ENCODE measurements at regions of chr17 and their contacts with region 1.

Region 1: GRCh38 chr17:44070455-44071197 is at the start of gene G6PC3:
- DNase-seq: peak; percentile 95 to 96
- H3K4me3 ChIP-seq: peak within 1 kb of the TSS; percentile 50 to 86 (median 82)
- H3K27ac ChIP-seq: peak within 1 kb of the TSS; percentile 96
- H3K4me1 ChIP-seq: peaks cover 0 to 4% (median under 1%) of the 10 kb centered on the region in 4 experiments; a peak in 4 of 7 replicates
- H3K27me3 ChIP-seq: no peaks in the 10 kb centered on the region
- CTCF ChIP-seq: no peak
- EP300 ChIP-seq: peak; percentile 6 to 84
- POLR2A ChIP-seq: peak; percentile 96 to 98
- RAD21 ChIP-seq: 0 out of 4 replicates have a peak, but pooled peaks have one; percentile 5
- total RNA-seq, gene G6PC3: 104 and 114 TPM in 2 replicates

Region 2: GRCh38 chr17:43661699-43662412 is 408.8 kb before region 1 on chr17 and contains the start of gene MEOX1:
- CTCF ChIA-PET with region 1: no interaction called
- POLR2A ChIA-PET with region 1: no interaction called
- DNase-seq: no peak
- H3K4me3 ChIP-seq: no peak within 1 kb of the TSS
- H3K27ac ChIP-seq: no peak within 1 kb of the TSS
- H3K4me1 ChIP-seq: peaks cover 3 to 26% (median 16%) of the 10 kb centered on the region in 4 experiments; a peak in 5 of 7 replicates
- H3K27me3 ChIP-seq: no peaks in the 10 kb centered on the region; a peak in 1 of 7 replicates
- CTCF ChIP-seq: no peak
- EP300 ChIP-seq: no peak
- POLR2A ChIP-seq: no peak
- RAD21 ChIP-seq: no peak
- total RNA-seq, gene MEOX1: not detected in 2 replicates

Region 3: GRCh38 chr17:44014437-44015172 is 56.0 kb before region 1 on chr17 and contains the start of gene TMEM101:
- CTCF ChIA-PET with region 1: no interaction called
- POLR2A ChIA-PET with region 1: interaction called, 10 read pairs
- DNase-seq: peak; percentile 82 to 86
- H3K4me3 ChIP-seq: peak within 1 kb of the TSS; percentile 84 to 91 (median 88)
- H3K27ac ChIP-seq: peak within 1 kb of the TSS; percentile 90
- H3K4me1 ChIP-seq: peaks cover 0 to 2% (median 0%) of the 10 kb centered on the region in 4 experiments; a peak in 3 of 7 replicates
- H3K27me3 ChIP-seq: no peaks in the 10 kb centered on the region
- CTCF ChIP-seq: no peak
- EP300 ChIP-seq: peak in 1 of 2 experiments; percentile 65; a peak in 1 of 3 replicates
- POLR2A ChIP-seq: peak in 1 of 2 experiments; percentile 86; a peak in 2 of 3 replicates
- RAD21 ChIP-seq: peak in 1 of 2 experiments; percentile 20; a peak in 1 of 4 replicates
- total RNA-seq, gene TMEM101: 16.1 and 20.9 TPM in 2 replicates

Region 4: DNA sequence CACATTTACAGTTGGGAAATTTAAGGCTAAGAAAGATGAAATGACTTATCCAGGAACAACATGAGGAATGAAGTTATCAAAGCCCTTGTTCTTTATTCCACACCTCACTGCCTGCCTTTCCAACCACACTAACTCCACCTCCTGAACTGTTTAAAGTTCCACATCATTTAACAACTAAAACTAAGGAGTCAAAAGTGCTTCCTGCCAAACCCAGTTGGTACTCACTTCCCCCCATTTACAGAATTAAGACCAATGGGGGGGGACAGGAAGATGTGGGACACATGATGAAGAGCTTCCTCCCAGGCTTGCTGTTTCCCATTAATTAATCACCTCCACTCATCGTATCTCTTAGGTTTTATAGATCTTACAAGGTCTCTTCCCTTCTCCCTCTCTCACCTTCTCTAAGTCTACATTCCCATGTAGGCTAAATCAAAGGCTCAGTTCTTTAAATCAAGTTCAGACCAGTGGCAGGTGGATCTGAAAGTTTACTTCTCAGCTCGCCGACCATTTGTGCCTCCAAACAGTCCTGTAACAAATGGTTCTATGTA is 36.7 kb before region 1 on chr17:
- CTCF ChIA-PET with region 1: interaction called, 4 read pairs
- POLR2A ChIA-PET with region 1: interaction called, 14 read pairs
- DNase-seq: no peak
- H3K4me3 ChIP-seq: no peak overlapping the region
- H3K27ac ChIP-seq: no peak overlapping the region
- H3K4me1 ChIP-seq: no peaks in the 10 kb centered on the region
- H3K27me3 ChIP-seq: no peaks in the 10 kb centered on the region
- CTCF ChIP-seq: no peak
- EP300 ChIP-seq: no peak
- POLR2A ChIP-seq: no peak
- RAD21 ChIP-seq: no peak

Region 5: GRCh38 chr17:44044067-44044466 is 26.6 kb before region 1 on chr17:
- CTCF ChIA-PET with region 1: interaction called, 7 read pairs
- POLR2A ChIA-PET with region 1: interaction called, 23 read pairs
- DNase-seq: no peak
- H3K4me3 ChIP-seq: no peak overlapping the region
- H3K27ac ChIP-seq: no peak overlapping the region
- H3K4me1 ChIP-seq: no peaks in the 10 kb centered on the region
- H3K27me3 ChIP-seq: no peaks in the 10 kb centered on the region
- CTCF ChIP-seq: no peak
- EP300 ChIP-seq: no peak
- POLR2A ChIP-seq: no peak
- RAD21 ChIP-seq: no peak

Region 6: GRCh38 chr17:44053125-44053872 is 17.3 kb before region 1 on chr17:
- CTCF ChIA-PET with region 1: no interaction called
- POLR2A ChIA-PET with region 1: interaction called, 17 read pairs
- DNase-seq: no peak
- H3K4me3 ChIP-seq: no peak overlapping the region
- H3K27ac ChIP-seq: no peak overlapping the region
- H3K4me1 ChIP-seq: no peaks in the 10 kb centered on the region
- H3K27me3 ChIP-seq: no peaks in the 10 kb centered on the region
- CTCF ChIP-seq: no peak
- EP300 ChIP-seq: no peak
- POLR2A ChIP-seq: no peak
- RAD21 ChIP-seq: no peak

Region 7: DNA sequence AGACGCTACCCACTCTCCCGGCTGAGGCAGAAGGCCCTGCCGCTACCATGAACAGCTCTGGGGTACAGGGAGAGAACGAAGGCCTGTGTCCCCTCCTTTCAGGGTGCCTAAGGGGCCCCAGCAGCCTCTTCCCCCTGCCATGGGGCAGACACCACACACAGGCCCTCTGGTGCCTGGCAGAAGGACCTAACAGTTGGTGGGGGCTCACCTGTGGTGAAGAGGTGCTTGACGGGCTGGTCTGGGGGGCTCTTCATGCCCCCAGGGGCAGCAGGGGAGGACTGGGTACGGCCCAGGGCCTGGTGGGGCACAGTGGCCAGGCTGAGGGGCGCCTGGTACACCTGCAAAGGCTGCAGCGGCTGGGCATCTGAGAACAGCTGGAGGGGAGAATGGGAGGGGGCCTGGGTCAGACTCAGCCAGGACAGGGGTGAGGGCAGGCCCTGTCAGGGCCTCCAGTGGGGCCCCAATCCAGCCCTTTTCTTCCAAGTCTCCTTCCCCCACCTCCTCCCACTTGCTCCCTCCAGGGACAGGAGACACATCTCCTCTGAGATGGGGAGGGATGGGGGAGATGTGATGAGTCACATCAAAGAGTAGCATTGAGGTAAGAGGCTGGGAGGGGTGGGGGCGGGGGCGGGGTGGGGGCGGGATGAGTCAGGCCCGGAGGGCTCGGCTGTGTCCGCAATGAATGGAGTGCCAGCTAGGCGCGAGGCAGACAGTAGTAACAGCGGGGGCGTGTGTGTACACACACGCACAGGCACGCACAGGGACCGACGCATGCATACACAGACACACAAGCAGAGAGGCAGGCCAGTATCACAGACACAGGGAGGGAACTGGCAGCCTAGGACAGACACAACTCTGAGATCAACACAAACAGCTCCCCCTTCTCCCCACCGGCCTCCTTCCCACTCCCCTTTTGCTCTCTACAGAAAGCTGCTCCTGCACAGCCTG is 16.0 kb after region 1 on chr17:
- CTCF ChIA-PET with region 1: interaction called, 71 read pairs
- POLR2A ChIA-PET with region 1: interaction called, 33 read pairs
- DNase-seq: no peak
- H3K4me3 ChIP-seq: peak overlapping the region in 3 of 4 experiments; percentile 19 to 46 (median 24); a peak in 5 of 8 replicates
- H3K27ac ChIP-seq: peak overlapping the region; percentile 70
- H3K4me1 ChIP-seq: peaks cover 3 to 18% (median 12%) of the 10 kb centered on the region in 4 experiments
- H3K27me3 ChIP-seq: no peaks in the 10 kb centered on the region
- CTCF ChIP-seq: no peak
- EP300 ChIP-seq: no peak
- POLR2A ChIP-seq: no peak
- RAD21 ChIP-seq: no peak

Region 8: GRCh38 chr17:44095642-44096496 is 25.2 kb after region 1 on chr17:
- CTCF ChIA-PET with region 1: interaction called, 5 read pairs
- POLR2A ChIA-PET with region 1: interaction called, 14 read pairs
- DNase-seq: peak; percentile 78 to 86
- H3K4me3 ChIP-seq: peak overlapping the region; percentile 32 to 53 (median 45); a peak in 7 of 8 replicates
- H3K27ac ChIP-seq: peak overlapping the region; percentile 92
- H3K4me1 ChIP-seq: peaks cover 1 to 11% (median 6%) of the 10 kb centered on the region in 4 experiments
- H3K27me3 ChIP-seq: no peaks in the 10 kb centered on the region
- CTCF ChIP-seq: no peak
- EP300 ChIP-seq: no peak; a peak in 1 of 3 replicates
- POLR2A ChIP-seq: peak in 1 of 2 experiments; percentile 67; a peak in 2 of 3 replicates
- RAD21 ChIP-seq: peak in 1 of 2 experiments; percentile 0; a peak in 1 of 4 replicates

Measured in H1 (cell line).